ENCODE measurements at regions of chr3 and their contacts with region 1.

Region 1: GRCh38 chr3:4504340-4505261 is 11.5 kb downstream of the ITPR1 start:
- DNase-seq: no peak
- ATAC-seq: 0 out of 3 replicates have a peak, but pooled peaks have one; percentile 4
- H3K4me3 ChIP-seq: peak overlapping the region; percentile 52
- H3K27ac ChIP-seq: peak overlapping the region; percentile 42
- H3K4me1 ChIP-seq: peaks cover 54% of the 10 kb centered on the region
- H3K27me3 ChIP-seq: no peaks in the 10 kb centered on the region
- CTCF ChIP-seq: no peak
- EP300 ChIP-seq: no peak
- POLR2A ChIP-seq: no peak
- RAD21 ChIP-seq: no peak

Region 2: GRCh38 chr3:4043867-4044575 is 460.6 kb before region 1 on chr3:
- CTCF ChIA-PET with region 1: no interaction called
- POLR2A ChIA-PET with region 1: no interaction called
- RAD21 ChIA-PET with region 1: no interaction called
- SMC1A ChIA-PET with region 1: no interaction called
- in situ Hi-C with region 1: no loop called
- intact Hi-C with region 1: no loop called
- DNase-seq: no peak
- ATAC-seq: no peak
- H3K4me3 ChIP-seq: no peak overlapping the region
- H3K27ac ChIP-seq: no peak overlapping the region
- H3K4me1 ChIP-seq: no peaks in the 10 kb centered on the region
- H3K27me3 ChIP-seq: no peaks in the 10 kb centered on the region
- CTCF ChIP-seq: no peak
- EP300 ChIP-seq: no peak
- POLR2A ChIP-seq: no peak
- RAD21 ChIP-seq: no peak

Region 3: GRCh38 chr3:4340411-4341335 is 163.9 kb before region 1 on chr3:
- CTCF ChIA-PET with region 1: no interaction called
- POLR2A ChIA-PET with region 1: no interaction called
- RAD21 ChIA-PET with region 1: no interaction called
- SMC1A ChIA-PET with region 1: no interaction called
- in situ Hi-C with region 1: no loop called
- intact Hi-C with region 1: no loop called
- DNase-seq: no peak
- ATAC-seq: no peak
- H3K4me3 ChIP-seq: no peak overlapping the region
- H3K27ac ChIP-seq: no peak overlapping the region
- H3K4me1 ChIP-seq: no peaks in the 10 kb centered on the region
- H3K27me3 ChIP-seq: no peaks in the 10 kb centered on the region
- CTCF ChIP-seq: no peak
- EP300 ChIP-seq: no peak
- POLR2A ChIP-seq: no peak
- RAD21 ChIP-seq: no peak

Region 4: GRCh38 chr3:4350789-4351163 is 153.8 kb before region 1 on chr3:
- CTCF ChIA-PET with region 1: interaction called, 15 read pairs
- POLR2A ChIA-PET with region 1: no interaction called
- RAD21 ChIA-PET with region 1: interaction called, 8 read pairs
- SMC1A ChIA-PET with region 1: interaction called, 21 read pairs
- in situ Hi-C with region 1: no loop called
- intact Hi-C with region 1: loop called (anchors 2 kb)
- DNase-seq: peak; percentile 31
- ATAC-seq: peak; percentile 96
- H3K4me3 ChIP-seq: no peak overlapping the region
- H3K27ac ChIP-seq: no peak overlapping the region
- H3K4me1 ChIP-seq: no peaks in the 10 kb centered on the region
- H3K27me3 ChIP-seq: no peaks in the 10 kb centered on the region
- CTCF ChIP-seq: peak; percentile 64 to 78 (median 73)
- EP300 ChIP-seq: no peak
- POLR2A ChIP-seq: no peak
- RAD21 ChIP-seq: peak; percentile 95

Region 5: DNA sequence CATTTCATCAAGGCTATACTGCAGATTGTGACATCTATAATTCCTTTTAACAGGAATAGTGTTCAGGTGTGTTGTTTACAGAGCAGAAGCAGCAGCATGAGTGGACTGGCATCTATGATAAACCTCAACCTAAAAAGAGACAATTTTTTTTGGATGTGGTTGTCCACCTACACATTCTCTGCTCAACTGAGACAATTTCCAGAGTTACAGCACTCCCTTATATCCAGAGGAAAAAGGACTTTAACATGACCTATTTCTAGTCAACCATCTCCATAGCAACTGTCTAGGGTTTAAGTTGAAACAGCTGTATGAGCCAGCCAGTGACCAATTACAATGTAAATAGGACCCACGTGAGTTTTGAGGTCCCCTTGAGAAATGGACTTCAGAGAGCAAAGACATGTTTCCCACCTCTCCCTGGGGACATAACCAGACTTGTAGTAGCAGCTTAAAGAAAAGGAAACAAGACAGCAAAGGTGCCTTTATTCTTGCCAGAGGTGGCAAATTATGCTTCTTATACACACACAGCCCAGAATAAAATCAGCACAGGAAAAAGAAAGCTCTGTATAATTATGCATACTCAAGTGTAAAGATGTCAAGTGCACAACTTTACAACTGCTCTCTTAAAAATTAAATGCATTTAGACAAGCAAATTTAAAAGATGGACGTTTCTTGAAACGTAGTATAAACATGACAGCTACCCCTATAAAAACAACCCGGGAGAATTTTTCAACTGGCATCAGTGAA is 77.8 kb before region 1 on chr3:
- CTCF ChIA-PET with region 1: no interaction called
- POLR2A ChIA-PET with region 1: interaction called, 5 read pairs
- RAD21 ChIA-PET with region 1: interaction called, 5 read pairs
- SMC1A ChIA-PET with region 1: interaction called, 3 read pairs
- in situ Hi-C with region 1: no loop called
- intact Hi-C with region 1: loop called (anchors 5 kb)
- DNase-seq: peak; percentile 91
- ATAC-seq: peak; percentile 90
- H3K4me3 ChIP-seq: no peak overlapping the region
- H3K27ac ChIP-seq: peak overlapping the region; percentile 33
- H3K4me1 ChIP-seq: peaks cover 11% of the 10 kb centered on the region
- H3K27me3 ChIP-seq: no peaks in the 10 kb centered on the region
- CTCF ChIP-seq: no peak
- EP300 ChIP-seq: peak in 1 of 2 experiments; percentile 68; a peak in 1 of 4 replicates
- POLR2A ChIP-seq: no peak
- RAD21 ChIP-seq: no peak

Region 6: DNA sequence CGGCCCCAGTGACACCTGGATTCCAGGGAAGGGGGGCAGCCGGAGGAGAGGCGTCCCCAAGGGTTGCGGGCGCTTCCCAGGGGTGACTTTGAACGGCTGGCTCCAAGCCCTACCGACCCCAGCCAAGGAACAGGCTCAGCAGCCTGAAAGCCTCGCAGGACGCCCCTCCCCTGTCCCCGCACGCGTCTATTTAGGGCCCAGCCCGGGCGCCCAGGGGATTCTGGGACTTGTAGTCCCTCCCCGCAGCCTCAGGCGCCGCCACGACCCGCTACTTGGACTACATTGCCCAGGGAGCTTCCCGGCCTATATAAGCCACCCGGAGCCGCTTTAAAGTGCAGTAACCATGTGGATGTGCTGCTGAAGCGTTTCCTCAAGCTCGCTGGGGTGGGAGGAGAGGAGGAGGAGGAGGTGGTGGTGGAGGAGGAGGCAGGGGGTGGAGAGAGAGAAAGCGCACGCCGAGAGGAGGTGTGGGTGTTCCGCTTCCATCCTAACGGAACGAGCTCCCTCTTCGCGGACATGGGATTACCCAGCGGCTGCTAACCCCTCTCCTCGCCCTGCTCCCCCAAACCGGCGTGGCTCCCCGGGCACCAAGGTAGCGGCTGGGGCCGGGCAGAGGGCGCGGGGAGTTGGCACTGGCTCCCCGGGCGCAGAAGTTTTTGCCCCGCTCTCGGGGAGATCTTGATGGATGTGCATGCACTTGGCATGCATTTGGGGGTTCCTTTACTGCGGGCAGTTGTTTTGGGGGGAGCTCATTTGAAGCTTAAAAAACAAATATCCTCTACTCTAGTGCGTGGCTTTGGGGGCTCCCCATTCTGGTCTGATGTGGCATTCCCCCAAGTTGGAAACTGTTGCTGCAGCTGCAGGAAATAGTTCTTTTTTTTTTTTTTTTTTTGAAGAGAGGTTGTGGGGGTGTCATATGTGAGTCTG is 11.3 kb before region 1 on chr3 and contains the start of gene ITPR1:
- CTCF ChIA-PET with region 1: interaction called, 52 read pairs
- POLR2A ChIA-PET with region 1: interaction called, 132 read pairs
- RAD21 ChIA-PET with region 1: interaction called, 128 read pairs
- SMC1A ChIA-PET with region 1: interaction called, 180 read pairs
- in situ Hi-C with region 1: no loop called
- intact Hi-C with region 1: loop called (anchors 1 kb)
- DNase-seq: peak; percentile 96
- ATAC-seq: peak; percentile 89
- H3K4me3 ChIP-seq: peak within 1 kb of the TSS; percentile 87
- H3K27ac ChIP-seq: peak within 1 kb of the TSS; percentile 82
- H3K4me1 ChIP-seq: peaks cover 14% of the 10 kb centered on the region
- H3K27me3 ChIP-seq: no peaks in the 10 kb centered on the region; a peak in 1 of 4 replicates
- CTCF ChIP-seq: no peak
- EP300 ChIP-seq: no peak
- POLR2A ChIP-seq: peak; percentile 100
- RAD21 ChIP-seq: peak; percentile 25; the same call in 1 of the 2 replicates
- polyA plus RNA-seq, gene ITPR1: 12.2 to 12.6 TPM

Region 7: DNA sequence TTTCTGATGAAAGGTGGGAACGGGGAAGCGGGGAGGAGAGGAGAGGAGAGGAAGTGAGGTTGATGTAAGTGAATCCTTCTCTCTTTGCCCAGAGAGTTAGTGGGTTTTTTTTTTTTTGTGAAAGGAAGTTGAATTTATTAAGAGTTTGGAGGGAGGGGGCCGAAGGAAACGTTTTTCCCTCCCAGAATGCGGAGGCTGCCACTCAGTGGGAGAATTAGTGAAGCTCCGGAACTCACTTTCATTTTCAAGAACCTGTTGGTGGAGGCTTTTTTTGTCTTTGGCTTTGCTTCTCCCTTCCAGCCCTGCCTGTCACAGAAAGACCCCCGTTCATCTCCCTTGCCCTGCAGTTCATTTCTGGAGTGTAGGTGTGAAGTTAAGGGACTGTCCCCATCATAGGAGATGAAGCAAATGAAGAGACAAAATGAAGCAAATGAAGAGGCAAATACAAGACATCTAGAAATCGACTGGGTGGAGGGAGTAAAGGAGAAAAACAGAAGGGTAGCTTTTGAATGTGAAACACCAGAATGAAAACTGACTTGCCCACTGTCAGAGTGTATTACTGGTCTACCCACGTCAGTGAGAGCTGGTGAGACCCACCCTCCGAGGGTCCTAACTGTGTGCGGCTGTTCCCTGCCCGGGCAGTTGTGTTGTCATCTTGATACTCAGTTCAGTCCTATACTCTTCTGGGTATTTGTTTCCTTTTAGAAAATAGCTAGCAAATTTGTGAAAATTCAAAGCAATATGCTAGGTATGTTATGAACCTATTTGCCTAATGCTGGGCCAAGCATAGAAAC is 80.1 kb after region 1 on chr3:
- CTCF ChIA-PET with region 1: interaction called, 4 read pairs
- POLR2A ChIA-PET with region 1: interaction called, 8 read pairs
- RAD21 ChIA-PET with region 1: interaction called, 18 read pairs
- SMC1A ChIA-PET with region 1: interaction called, 12 read pairs
- in situ Hi-C with region 1: no loop called
- intact Hi-C with region 1: no loop called
- DNase-seq: peak; percentile 13
- ATAC-seq: peak; percentile 56
- H3K4me3 ChIP-seq: peak overlapping the region; percentile 82
- H3K27ac ChIP-seq: peak overlapping the region; percentile 30
- H3K4me1 ChIP-seq: peaks cover 13% of the 10 kb centered on the region
- H3K27me3 ChIP-seq: no peaks in the 10 kb centered on the region
- CTCF ChIP-seq: peak in 1 of 3 experiments; percentile 55; a peak in 2 of 6 replicates
- EP300 ChIP-seq: 0 out of 4 replicates have a peak, but pooled peaks of 1 of the 2 experiments have one; percentile 24
- POLR2A ChIP-seq: no peak
- RAD21 ChIP-seq: peak; percentile 54; the same call in 1 of the 2 replicates

Region 8: DNA sequence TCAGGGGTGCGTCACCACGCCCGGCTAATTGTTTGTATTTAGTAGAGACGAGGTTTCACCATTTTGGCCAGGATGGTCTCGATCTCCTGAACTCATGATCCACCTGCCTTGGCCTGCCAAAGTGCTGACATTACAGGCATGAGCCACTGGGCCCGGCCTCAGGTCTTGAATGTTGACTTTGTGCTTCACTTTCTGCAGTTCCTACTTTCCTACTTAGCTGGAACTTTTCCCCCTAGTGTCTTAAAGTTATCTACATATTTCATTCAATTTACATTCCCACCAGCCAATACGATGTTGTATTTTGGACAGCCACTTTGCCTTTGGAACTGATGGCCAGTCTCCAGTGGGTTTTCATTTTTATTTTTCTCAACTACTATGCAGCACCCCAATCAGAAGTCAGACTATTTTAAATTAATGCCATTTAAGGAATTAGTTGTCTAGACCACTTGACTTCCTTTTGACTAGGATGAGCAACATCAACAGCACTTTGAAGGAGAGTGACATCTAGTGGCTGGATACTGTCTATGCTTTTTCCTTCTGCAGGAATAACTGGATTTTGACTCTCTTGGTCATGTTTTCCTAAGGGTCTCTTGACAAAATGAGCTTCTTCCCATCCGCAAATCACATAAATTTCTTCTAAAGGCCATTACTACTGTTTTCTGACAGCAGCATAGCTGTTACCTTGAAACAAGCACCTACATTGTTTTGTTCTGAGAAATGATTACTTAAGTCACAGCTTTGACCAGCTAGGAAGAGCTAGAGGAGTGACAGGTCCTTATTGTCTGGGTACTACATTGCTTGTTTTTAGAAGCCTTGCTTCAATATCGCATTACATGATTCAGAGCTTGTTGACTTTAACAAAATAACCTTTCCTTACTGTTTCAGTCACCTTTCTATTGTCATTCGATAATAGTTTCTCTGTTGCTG is 128.7 kb after region 1 on chr3:
- CTCF ChIA-PET with region 1: interaction called, 10 read pairs
- POLR2A ChIA-PET with region 1: no interaction called
- RAD21 ChIA-PET with region 1: interaction called, 5 read pairs
- SMC1A ChIA-PET with region 1: interaction called, 9 read pairs
- in situ Hi-C with region 1: no loop called
- intact Hi-C with region 1: loop called (anchors 5 kb)
- DNase-seq: peak; percentile 30
- ATAC-seq: peak; percentile 86
- H3K4me3 ChIP-seq: no peak overlapping the region
- H3K27ac ChIP-seq: no peak overlapping the region
- H3K4me1 ChIP-seq: no peaks in the 10 kb centered on the region
- H3K27me3 ChIP-seq: no peaks in the 10 kb centered on the region
- CTCF ChIP-seq: peak; percentile 75 to 81 (median 77)
- EP300 ChIP-seq: no peak
- POLR2A ChIP-seq: no peak
- RAD21 ChIP-seq: peak; percentile 93

Measured in GM12878 (cell line).